IMR-90 (cell line): ENCODE measurements at regions of chr12 and their contacts with region 1.

Region 1: DNA sequence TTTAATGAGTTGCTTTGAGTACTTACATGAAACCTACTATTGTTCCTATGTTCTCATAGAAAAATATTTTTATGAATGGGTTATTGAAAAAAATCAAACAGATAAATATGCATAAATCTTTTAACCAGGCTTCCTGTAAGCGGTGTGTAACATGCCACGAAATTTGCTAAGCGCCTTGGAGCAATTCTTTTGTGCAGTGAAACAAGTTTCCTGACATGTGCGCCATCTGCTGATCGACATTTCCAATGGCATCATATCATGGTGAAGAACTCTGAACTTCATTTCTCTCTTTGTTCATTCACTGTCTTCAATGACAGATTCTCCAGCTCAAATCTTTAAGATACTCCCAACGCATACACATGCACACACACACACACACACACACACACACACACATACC is 145.6 kb upstream of the NAV3 start:
- DNase-seq: peak; percentile 80
- ATAC-seq: peak; percentile 87
- H3K4me3 ChIP-seq: no peak overlapping the region
- H3K27ac ChIP-seq: no peak overlapping the region
- H3K4me1 ChIP-seq: no peaks in the 10 kb centered on the region
- H3K27me3 ChIP-seq: no peaks in the 10 kb centered on the region
- CTCF ChIP-seq: peak; percentile 78
- POLR2A ChIP-seq: no peak
- RAD21 ChIP-seq: peak; percentile 82

Region 2: DNA sequence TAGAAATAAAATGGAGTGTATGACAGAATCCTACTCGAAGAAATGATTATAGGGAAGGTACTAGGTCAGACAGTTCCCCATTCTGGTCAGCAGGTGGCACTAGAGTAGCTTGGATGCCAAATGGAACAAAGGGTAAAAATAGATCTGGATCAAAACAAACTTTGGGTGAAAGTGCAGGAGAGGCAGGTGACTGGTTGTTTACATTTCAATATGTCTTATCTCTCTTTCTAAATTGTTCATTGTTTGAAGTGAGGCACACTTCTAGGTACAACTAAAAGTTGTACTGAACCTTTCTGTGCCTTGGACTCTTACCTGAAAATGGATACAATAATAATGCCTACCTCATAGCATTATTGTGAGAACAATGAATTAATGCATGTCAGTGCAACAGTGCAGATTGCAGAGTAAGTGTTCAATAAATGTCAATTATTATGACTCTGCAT is 1063.5 kb before region 1 on chr12:
- CTCF ChIA-PET with region 1: no interaction called
- POLR2A ChIA-PET with region 1: no interaction called
- dilution Hi-C with region 1: no loop called
- in situ Hi-C with region 1: no loop called
- intact Hi-C with region 1: loop called (anchors 2 kb)
- DNase-seq: peak; percentile 72
- ATAC-seq: peak; percentile 81
- H3K4me3 ChIP-seq: no peak overlapping the region
- H3K27ac ChIP-seq: no peak overlapping the region
- H3K4me1 ChIP-seq: peaks cover 5% of the 10 kb centered on the region; the same call in 1 of the 2 replicates
- H3K27me3 ChIP-seq: no peaks in the 10 kb centered on the region
- CTCF ChIP-seq: peak; percentile 97
- POLR2A ChIP-seq: peak; percentile 55; the same call in 1 of the 2 replicates
- RAD21 ChIP-seq: peak; percentile 100

Region 3: DNA sequence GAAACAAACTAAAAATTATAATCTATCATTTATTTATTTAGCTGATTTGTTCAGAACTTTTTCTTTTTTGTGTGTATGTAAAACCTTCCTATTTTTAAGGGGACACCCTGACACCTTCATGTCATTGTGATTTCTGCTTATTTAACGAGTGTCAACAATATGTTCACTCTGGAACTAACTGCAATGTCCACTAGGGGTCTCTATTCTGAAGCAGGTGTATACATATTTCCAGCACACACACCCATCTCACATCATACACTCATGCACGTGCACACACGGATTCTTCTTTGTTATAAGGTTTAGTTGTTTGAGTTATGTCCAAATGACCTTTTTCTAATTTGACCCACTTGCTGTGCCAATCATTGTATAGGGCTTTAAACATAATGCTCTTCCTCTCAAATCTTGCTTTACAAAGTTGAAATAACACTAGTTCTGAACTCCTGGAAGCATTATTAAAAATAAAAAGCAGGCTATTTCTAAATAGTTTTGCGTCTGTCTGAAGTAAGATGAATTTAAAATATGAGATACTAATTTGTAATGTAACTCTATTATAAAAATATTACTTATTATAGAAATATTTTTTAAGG is 635.3 kb before region 1 on chr12:
- CTCF ChIA-PET with region 1: interaction called, 9 read pairs
- POLR2A ChIA-PET with region 1: no interaction called
- dilution Hi-C with region 1: no loop called
- in situ Hi-C with region 1: no loop called
- intact Hi-C with region 1: loop called (anchors 5 kb)
- DNase-seq: peak; percentile 70
- ATAC-seq: peak; percentile 80
- H3K4me3 ChIP-seq: no peak overlapping the region
- H3K27ac ChIP-seq: no peak overlapping the region
- H3K4me1 ChIP-seq: no peaks in the 10 kb centered on the region
- H3K27me3 ChIP-seq: no peaks in the 10 kb centered on the region
- CTCF ChIP-seq: peak; percentile 69
- POLR2A ChIP-seq: no peak
- RAD21 ChIP-seq: peak; percentile 71

Region 4: GRCh38 chr12:77152623-77153193 is 532.4 kb before region 1 on chr12:
- CTCF ChIA-PET with region 1: interaction called, 11 read pairs
- POLR2A ChIA-PET with region 1: no interaction called
- dilution Hi-C with region 1: loop called (anchors 25 kb)
- in situ Hi-C with region 1: loop called (anchors 5 kb)
- intact Hi-C with region 1: loop called (anchors 1 kb)
- DNase-seq: peak; percentile 56
- ATAC-seq: peak; percentile 54; the same call in 1 of the 2 replicates
- H3K4me3 ChIP-seq: no peak overlapping the region
- H3K27ac ChIP-seq: no peak overlapping the region
- H3K4me1 ChIP-seq: no peaks in the 10 kb centered on the region
- H3K27me3 ChIP-seq: no peaks in the 10 kb centered on the region
- CTCF ChIP-seq: peak; percentile 65
- POLR2A ChIP-seq: no peak
- RAD21 ChIP-seq: peak; percentile 76

Region 5: GRCh38 chr12:77324763-77325468 is 360.2 kb before region 1 on chr12:
- CTCF ChIA-PET with region 1: no interaction called
- POLR2A ChIA-PET with region 1: no interaction called
- dilution Hi-C with region 1: no loop called
- in situ Hi-C with region 1: no loop called
- intact Hi-C with region 1: loop called (anchors 5 kb)
- DNase-seq: peak; percentile 61
- ATAC-seq: peak; percentile 99
- H3K4me3 ChIP-seq: peak overlapping the region; percentile 55
- H3K27ac ChIP-seq: no peak overlapping the region
- H3K4me1 ChIP-seq: no peaks in the 10 kb centered on the region
- H3K27me3 ChIP-seq: peaks cover 24% of the 10 kb centered on the region
- CTCF ChIP-seq: peak; percentile 65
- POLR2A ChIP-seq: no peak
- RAD21 ChIP-seq: peak; percentile 61

Region 6: DNA sequence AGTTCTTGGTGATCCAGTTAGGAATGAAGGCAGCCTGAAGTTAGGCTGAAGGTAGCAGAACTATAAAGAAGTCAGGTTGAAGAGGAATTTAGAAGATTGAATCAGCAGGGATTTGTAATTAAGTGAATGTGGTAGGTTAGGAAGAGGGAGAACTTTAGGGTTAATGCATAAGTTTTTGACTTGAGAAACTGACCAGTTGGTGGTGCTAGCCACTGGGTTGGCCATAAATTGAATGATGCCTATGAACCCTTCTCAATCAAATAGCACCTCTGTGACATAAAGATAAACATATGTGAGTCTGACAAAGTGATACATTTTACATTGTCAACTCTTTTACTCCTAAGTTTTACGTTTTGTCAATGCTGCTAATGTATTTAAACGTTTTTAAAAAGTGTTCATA is 145.0 kb before region 1 on chr12:
- CTCF ChIA-PET with region 1: interaction called, 3 read pairs
- POLR2A ChIA-PET with region 1: no interaction called
- dilution Hi-C with region 1: no loop called
- in situ Hi-C with region 1: no loop called
- intact Hi-C with region 1: loop called (anchors 1 kb)
- DNase-seq: no peak
- ATAC-seq: no peak
- H3K4me3 ChIP-seq: no peak overlapping the region
- H3K27ac ChIP-seq: no peak overlapping the region
- H3K4me1 ChIP-seq: no peaks in the 10 kb centered on the region
- H3K27me3 ChIP-seq: no peaks in the 10 kb centered on the region; the same call in 1 of the 2 replicates
- CTCF ChIP-seq: 0 out of 2 replicates have a peak, but pooled peaks have one; percentile 26
- POLR2A ChIP-seq: no peak
- RAD21 ChIP-seq: peak; percentile 30